Psoas muscle (tissue), 8 donors: ENCODE measurements at regions of chr6 and their contacts with region 1.

Region 1: GRCh38 chr6:132962936-132963868 is 148.8 kb downstream of the RPS12 start:
- DNase-seq: peak; percentile 65 to 82
- ATAC-seq: peak; percentile 66 to 95 (median 86)
- H3K4me3 ChIP-seq: no peak overlapping the region
- H3K27ac ChIP-seq: peak overlapping the region; percentile 67
- H3K4me1 ChIP-seq: peaks cover 26% of the 10 kb centered on the region
- H3K27me3 ChIP-seq: no peaks in the 10 kb centered on the region
- CTCF ChIP-seq: peak; percentile 89

Region 2: GRCh38 chr6:132830334-132830751 is 132.9 kb before region 1 on chr6:
- intact Hi-C with region 1: loop called in 1 of 2 experiments (anchors 5 kb)
- DNase-seq: no peak
- ATAC-seq: peak; percentile 47 to 64 (median 54)
- H3K4me3 ChIP-seq: no peak overlapping the region
- H3K27ac ChIP-seq: no peak overlapping the region
- H3K4me1 ChIP-seq: no peaks in the 10 kb centered on the region
- H3K27me3 ChIP-seq: no peaks in the 10 kb centered on the region
- CTCF ChIP-seq: peak; percentile 59

Region 3: GRCh38 chr6:133040094-133040802 is 77.0 kb after region 1 on chr6:
- intact Hi-C with region 1: loop called (anchors 2 kb)
- DNase-seq: no peak
- ATAC-seq: peak; percentile 58 to 76 (median 73)
- H3K4me3 ChIP-seq: no peak overlapping the region
- H3K27ac ChIP-seq: no peak overlapping the region
- H3K4me1 ChIP-seq: no peaks in the 10 kb centered on the region
- H3K27me3 ChIP-seq: no peaks in the 10 kb centered on the region
- CTCF ChIP-seq: peak; percentile 51

Region 4: DNA sequence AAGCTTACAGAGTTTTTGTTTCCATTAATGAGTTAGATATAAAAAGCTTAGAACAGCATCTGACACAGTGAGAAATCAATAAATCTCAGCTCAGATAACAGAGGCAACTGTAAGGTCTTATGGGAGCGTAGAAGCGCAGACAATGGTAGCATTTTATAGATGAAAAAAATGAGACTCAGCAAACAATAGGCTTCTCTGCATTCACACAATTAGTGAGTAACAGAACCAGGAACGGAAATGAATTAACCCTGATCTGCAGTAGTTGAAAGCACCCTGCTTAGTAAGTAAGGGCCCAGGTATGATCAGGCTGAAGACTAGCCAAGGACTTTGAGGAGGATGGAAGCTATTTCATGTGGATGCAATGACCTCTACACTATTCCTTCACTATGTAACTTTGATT is 130.8 kb after region 1 on chr6:
- intact Hi-C with region 1: no loop called
- DNase-seq: no peak
- ATAC-seq: no peak
- H3K4me3 ChIP-seq: no peak overlapping the region
- H3K27ac ChIP-seq: no peak overlapping the region
- H3K4me1 ChIP-seq: no peaks in the 10 kb centered on the region
- H3K27me3 ChIP-seq: no peaks in the 10 kb centered on the region
- CTCF ChIP-seq: no peak

Region 5: DNA sequence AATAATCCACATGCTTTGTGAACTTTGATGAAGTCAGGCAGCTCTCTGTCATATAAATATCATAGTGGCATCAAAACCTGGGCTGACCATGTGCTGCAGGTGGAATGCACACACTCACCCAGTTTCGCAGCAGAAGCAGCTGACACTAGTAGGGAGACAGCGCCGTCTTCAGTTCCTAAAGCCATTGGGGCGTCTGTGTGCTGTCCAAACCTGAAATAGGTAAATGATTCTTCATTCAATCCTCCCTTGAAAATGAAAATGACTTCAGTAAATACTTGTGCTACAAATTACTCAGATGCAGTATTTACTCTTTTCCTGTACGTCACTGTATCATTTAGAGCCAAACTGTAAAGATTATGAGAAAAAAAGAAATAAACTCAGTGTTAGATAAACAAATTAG is 405.5 kb after region 1 on chr6:
- intact Hi-C with region 1: loop called in 1 of 2 experiments (anchors 5 kb)
- DNase-seq: peak; percentile 38 to 81
- ATAC-seq: peak; percentile 96 to 99 (median 98)
- H3K4me3 ChIP-seq: no peak overlapping the region
- H3K27ac ChIP-seq: peak overlapping the region; percentile 86
- H3K4me1 ChIP-seq: peaks cover 54% of the 10 kb centered on the region
- H3K27me3 ChIP-seq: no peaks in the 10 kb centered on the region
- CTCF ChIP-seq: peak; percentile 50

Region 6: GRCh38 chr6:133553652-133554051 is 590.5 kb after region 1 on chr6:
- intact Hi-C with region 1: loop called (anchors 2 to 10 kb)
- DNase-seq: no peak
- ATAC-seq: peak in 1 of 4 donors; percentile 55
- H3K4me3 ChIP-seq: no peak overlapping the region
- H3K27ac ChIP-seq: peak overlapping the region; percentile 82
- H3K4me1 ChIP-seq: peaks cover 28% of the 10 kb centered on the region
- H3K27me3 ChIP-seq: no peaks in the 10 kb centered on the region
- CTCF ChIP-seq: peak; percentile 73